CD4-positive, alpha-beta memory T cell (primary cell): ENCODE measurements at regions of chr14 and their contacts with region 1.

Region 1: GRCh38 chr14:64503478-64504309 is at the start of gene ZBTB25:
- DNase-seq: peak; percentile 97 to 100 (median 98)
- H3K4me3 ChIP-seq: peak within 1 kb of the TSS; percentile 78 to 87
- H3K4me3 Mint-ChIP-seq: peak within 1 kb of the TSS; percentile 96 to 100 (median 98)
- H3K27ac ChIP-seq: peak within 1 kb of the TSS; percentile 100
- H3K27ac Mint-ChIP-seq: peak within 1 kb of the TSS; percentile 99 to 100 (median 100)
- H3K4me1 ChIP-seq: peaks cover 59% of the 10 kb centered on the region
- H3K4me1 Mint-ChIP-seq: peaks cover 33 to 84% (median 42%) of the 10 kb centered on the region in 4 donors
- H3K27me3 ChIP-seq: no peaks in the 10 kb centered on the region
- H3K27me3 Mint-ChIP-seq: peaks cover 0 to 2% of the 10 kb centered on the region in 2 donors
- total RNA-seq, gene ZBTB25: 84.1 to 87.5 TPM

Region 2: DNA sequence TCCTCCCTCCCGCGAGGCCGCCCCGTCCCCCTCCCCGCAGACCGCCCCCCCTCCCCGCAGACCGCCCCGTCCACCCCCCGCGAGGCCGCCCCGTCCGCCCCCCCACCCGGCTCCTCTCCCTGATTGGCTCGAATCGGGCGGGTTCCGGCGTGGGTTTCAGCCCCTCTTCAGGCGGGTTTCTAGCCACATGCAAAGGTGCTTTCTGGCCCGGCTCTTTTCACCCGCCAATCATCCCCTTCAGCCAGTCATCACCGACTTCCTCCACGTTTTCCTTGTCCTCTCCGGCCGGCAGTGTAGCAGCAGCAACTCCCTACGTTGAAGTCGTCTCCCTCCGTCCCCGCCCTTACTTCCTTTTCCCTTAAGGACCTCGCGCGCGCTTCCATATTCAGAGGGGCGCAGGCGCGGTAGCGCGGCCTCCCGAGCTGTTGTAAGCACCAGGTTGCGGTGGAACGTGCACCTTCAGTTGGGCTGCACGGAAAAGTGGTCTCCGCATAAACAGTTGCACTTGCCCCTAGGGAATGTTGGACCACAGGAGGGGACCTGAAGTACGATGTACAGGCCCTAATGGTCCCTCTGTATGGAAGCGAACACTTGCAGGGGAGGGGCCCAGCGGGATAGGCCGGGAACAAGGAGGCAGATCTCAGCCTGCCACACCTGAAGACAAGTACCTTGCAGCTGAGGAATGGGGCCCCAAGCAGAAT is 164.9 kb before region 1 on chr14:
- CTCF ChIA-PET with region 1: no interaction called
- POLR2A ChIA-PET with region 1: interaction called, 44 read pairs
- intact Hi-C with region 1: loop called (anchors 2 kb)
- DNase-seq: peak; percentile 84 to 91 (median 85)
- H3K4me3 ChIP-seq: peak overlapping the region; percentile 36 to 77
- H3K4me3 Mint-ChIP-seq: peak overlapping the region; percentile 93 to 99 (median 95)
- H3K27ac ChIP-seq: peak overlapping the region; percentile 34
- H3K27ac Mint-ChIP-seq: peak overlapping the region; percentile 83 to 97 (median 95)
- H3K4me1 ChIP-seq: peaks cover 17% of the 10 kb centered on the region
- H3K4me1 Mint-ChIP-seq: peaks cover 12 to 27% (median 21%) of the 10 kb centered on the region in 4 donors
- H3K27me3 ChIP-seq: no peaks in the 10 kb centered on the region
- H3K27me3 Mint-ChIP-seq: no peaks in the 10 kb centered on the region

Region 3: DNA sequence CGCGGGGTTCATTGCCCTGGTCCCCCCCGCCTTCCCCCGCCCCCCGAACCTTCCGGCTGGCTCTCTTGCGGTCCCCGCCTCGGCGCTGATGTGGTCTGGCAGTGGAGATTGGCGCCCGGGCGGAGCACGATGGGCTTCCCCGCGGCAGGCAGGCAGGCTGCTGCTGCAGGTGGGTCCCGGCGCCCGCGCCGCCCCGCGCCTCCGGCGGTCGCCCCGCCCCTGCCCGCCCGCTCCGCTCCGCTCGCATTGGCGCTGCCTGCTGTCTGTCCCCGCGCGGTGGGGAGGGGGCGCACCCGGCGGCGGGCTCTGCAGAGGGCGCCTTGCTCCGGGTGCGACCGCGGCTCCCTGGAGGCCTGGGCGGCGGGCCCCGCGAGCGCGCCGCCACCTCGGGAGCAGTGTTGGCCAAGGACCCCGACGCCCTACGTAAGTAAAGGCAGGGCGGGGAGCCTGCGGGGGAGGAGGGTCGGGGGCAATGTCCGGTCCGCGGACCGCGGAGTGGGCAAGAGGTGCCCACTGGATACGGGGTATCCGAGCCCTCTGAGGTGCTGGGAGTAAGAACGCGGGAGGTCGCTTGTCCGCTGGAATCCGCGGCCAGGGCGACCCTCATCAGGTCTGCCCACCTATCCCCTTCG is 38.4 kb before region 1 on chr14 and contains the start of gene AKAP5:
- CTCF ChIA-PET with region 1: no interaction called
- POLR2A ChIA-PET with region 1: interaction called, 12 read pairs
- intact Hi-C with region 1: loop called (anchors 2 kb)
- DNase-seq: peak; percentile 62 to 72 (median 64)
- H3K4me3 ChIP-seq: peak within 1 kb of the TSS; percentile 38 to 57
- H3K4me3 Mint-ChIP-seq: peak within 1 kb of the TSS; percentile 82 to 95 (median 90)
- H3K27ac ChIP-seq: peak within 1 kb of the TSS; percentile 29
- H3K27ac Mint-ChIP-seq: peak within 1 kb of the TSS; percentile 71 to 89 (median 78)
- H3K4me1 ChIP-seq: peaks cover 36% of the 10 kb centered on the region
- H3K4me1 Mint-ChIP-seq: peaks cover 25 to 45% (median 33%) of the 10 kb centered on the region in 4 donors
- H3K27me3 ChIP-seq: no peaks in the 10 kb centered on the region
- H3K27me3 Mint-ChIP-seq: no peaks in the 10 kb centered on the region
- total RNA-seq, gene AKAP5: 0.14 to 0.20 TPM

Region 4: GRCh38 chr14:64520701-64521100 is 17.0 kb after region 1 on chr14:
- CTCF ChIA-PET with region 1: interaction called, 8 read pairs
- POLR2A ChIA-PET with region 1: interaction called, 12 read pairs
- intact Hi-C with region 1: no loop called
- DNase-seq: no peak
- H3K4me3 ChIP-seq: no peak overlapping the region
- H3K4me3 Mint-ChIP-seq: no peak overlapping the region
- H3K27ac ChIP-seq: no peak overlapping the region
- H3K27ac Mint-ChIP-seq: no peak overlapping the region
- H3K4me1 ChIP-seq: peaks cover 53% of the 10 kb centered on the region
- H3K4me1 Mint-ChIP-seq: peaks cover 22 to 37% (median 29%) of the 10 kb centered on the region in 4 donors
- H3K27me3 ChIP-seq: no peaks in the 10 kb centered on the region
- H3K27me3 Mint-ChIP-seq: no peaks in the 10 kb centered on the region

Region 5: DNA sequence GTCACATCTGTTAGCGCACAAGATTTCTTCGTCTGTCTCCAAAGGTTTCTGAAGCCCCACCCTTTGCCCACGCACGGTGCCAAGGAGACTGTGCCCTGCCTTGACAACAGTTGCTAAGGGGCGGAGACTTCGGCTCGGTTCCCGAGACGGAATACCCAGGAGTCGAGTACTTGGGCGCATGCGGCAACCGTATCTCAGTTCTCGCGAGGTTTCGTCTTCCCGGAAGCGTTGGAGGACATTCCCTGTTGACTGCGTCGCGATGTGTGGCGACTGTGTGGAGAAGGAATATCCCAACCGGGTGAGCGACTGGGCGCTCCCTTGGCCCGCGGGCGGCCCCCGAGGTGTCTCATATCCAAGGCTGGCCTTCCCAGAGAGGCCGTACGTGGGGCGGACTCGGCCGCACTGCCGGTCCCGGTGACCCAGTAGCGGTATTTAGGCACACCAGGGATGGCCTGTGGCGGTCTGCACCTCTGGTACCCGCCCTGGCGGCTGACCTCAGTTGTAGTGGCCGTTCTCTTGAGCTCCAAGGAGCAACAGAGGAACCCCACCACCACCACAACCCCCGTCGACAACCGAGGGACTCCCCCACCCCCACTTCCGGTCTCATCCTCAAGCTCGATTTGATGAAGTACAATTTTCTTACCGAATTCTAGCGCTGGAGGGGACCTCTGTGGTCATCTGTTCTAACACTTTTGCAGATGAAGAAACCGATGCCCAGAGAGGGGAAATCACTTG is 410.7 kb after region 1 on chr14 and contains the start of gene CHURC1:
- CTCF ChIA-PET with region 1: no interaction called
- POLR2A ChIA-PET with region 1: interaction called, 3 read pairs
- intact Hi-C with region 1: loop called (anchors 1 kb)
- DNase-seq: peak; percentile 94 to 99 (median 97)
- H3K4me3 ChIP-seq: peak within 1 kb of the TSS; percentile 90 to 99
- H3K4me3 Mint-ChIP-seq: peak within 1 kb of the TSS; percentile 84 to 95 (median 90)
- H3K27ac ChIP-seq: peak within 1 kb of the TSS; percentile 100
- H3K27ac Mint-ChIP-seq: peak within 1 kb of the TSS; percentile 92 to 99 (median 98)
- H3K4me1 ChIP-seq: peaks cover 46% of the 10 kb centered on the region
- H3K4me1 Mint-ChIP-seq: peaks cover 33 to 56% (median 45%) of the 10 kb centered on the region in 4 donors
- H3K27me3 ChIP-seq: no peaks in the 10 kb centered on the region
- H3K27me3 Mint-ChIP-seq: peaks cover 0 to 1% of the 10 kb centered on the region in 2 donors
- total RNA-seq, gene CHURC1: 112 to 116 TPM

Region 6: GRCh38 chr14:64960762-64961278 is 457.1 kb after region 1 on chr14:
- CTCF ChIA-PET with region 1: no interaction called
- POLR2A ChIA-PET with region 1: no interaction called
- intact Hi-C with region 1: no loop called
- DNase-seq: no peak
- H3K4me3 ChIP-seq: no peak overlapping the region
- H3K4me3 Mint-ChIP-seq: no peak overlapping the region
- H3K27ac ChIP-seq: no peak overlapping the region
- H3K27ac Mint-ChIP-seq: peak overlapping the region in 2 of 7 donors; percentile 52 to 59
- H3K4me1 ChIP-seq: peaks cover 4% of the 10 kb centered on the region
- H3K4me1 Mint-ChIP-seq: peaks cover 0 to 4% (median 1%) of the 10 kb centered on the region in 4 donors
- H3K27me3 ChIP-seq: no peaks in the 10 kb centered on the region
- H3K27me3 Mint-ChIP-seq: no peaks in the 10 kb centered on the region